ENCODE measurements at regions of chr12 and their contacts with region 1.

Region 1: GRCh38 chr12:46153268-46153872 is 115.5 kb downstream of the SLC38A1 start:
- DNase-seq: no peak
- ATAC-seq: no peak
- H3K4me3 ChIP-seq: no peak overlapping the region
- H3K27ac ChIP-seq: no peak overlapping the region
- H3K4me1 ChIP-seq: no peaks in the 10 kb centered on the region
- H3K27me3 ChIP-seq: no peaks in the 10 kb centered on the region
- CTCF ChIP-seq: peak; percentile 56

Region 2: GRCh38 chr12:46049665-46050064 is 103.7 kb before region 1 on chr12:
- intact Hi-C with region 1: no loop called
- DNase-seq: no peak
- ATAC-seq: no peak
- H3K4me3 ChIP-seq: no peak overlapping the region
- H3K27ac ChIP-seq: no peak overlapping the region
- H3K4me1 ChIP-seq: no peaks in the 10 kb centered on the region
- H3K27me3 ChIP-seq: no peaks in the 10 kb centered on the region
- CTCF ChIP-seq: no peak

Region 3: DNA sequence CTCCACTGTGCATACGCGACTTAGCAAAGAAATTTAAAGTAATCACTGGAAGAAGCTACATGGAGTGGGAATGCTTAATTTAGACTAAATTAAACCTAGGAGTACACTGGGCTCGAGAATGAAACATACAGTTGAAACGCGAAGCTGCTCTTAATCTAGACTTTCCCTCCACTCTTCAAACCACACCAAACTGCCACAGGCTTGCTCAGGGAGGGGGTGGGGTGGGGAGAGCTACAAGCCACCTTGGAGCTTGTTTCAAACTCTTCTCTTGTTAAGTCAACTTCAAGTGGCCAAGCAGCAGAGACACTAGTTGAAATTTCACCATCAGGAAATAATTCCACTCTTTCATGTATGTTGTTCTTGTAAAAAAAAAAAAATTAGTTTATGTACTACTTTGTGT is 45.5 kb after region 1 on chr12:
- intact Hi-C with region 1: no loop called
- DNase-seq: no peak
- ATAC-seq: no peak
- H3K4me3 ChIP-seq: no peak overlapping the region
- H3K27ac ChIP-seq: no peak overlapping the region
- H3K4me1 ChIP-seq: peaks cover 11% of the 10 kb centered on the region
- H3K27me3 ChIP-seq: no peaks in the 10 kb centered on the region
- CTCF ChIP-seq: no peak

Region 4: GRCh38 chr12:46303039-46303666 is 149.8 kb after region 1 on chr12:
- intact Hi-C with region 1: loop called in 1 of 2 experiments (anchors 10 kb)
- DNase-seq: no peak
- ATAC-seq: peak in 3 of 4 donors; percentile 35 to 72 (median 66)
- H3K4me3 ChIP-seq: no peak overlapping the region
- H3K27ac ChIP-seq: no peak overlapping the region
- H3K4me1 ChIP-seq: no peaks in the 10 kb centered on the region
- H3K27me3 ChIP-seq: no peaks in the 10 kb centered on the region
- CTCF ChIP-seq: peak; percentile 52

Measured in psoas muscle (tissue), 8 donors.